ENCODE measurements at regions of chr1 and their contacts with region 1.

Region 1: GRCh38 chr1:20212685-20213331 is 26.5 kb upstream of the PLA2G2C start:
- DNase-seq: peak; percentile 32 to 69 (median 49)
- H3K4me3 ChIP-seq: no peak overlapping the region
- H3K4me3 Mint-ChIP-seq: peak overlapping the region in 6 of 7 donors; percentile 11 to 54 (median 37)
- H3K27ac ChIP-seq: no peak overlapping the region
- H3K27ac Mint-ChIP-seq: peak overlapping the region in 2 of 8 donors; percentile 19 to 34
- H3K4me1 ChIP-seq: peaks cover 12% of the 10 kb centered on the region
- H3K4me1 Mint-ChIP-seq: peaks cover 7 to 14% (median 9%) of the 10 kb centered on the region in 3 donors
- H3K27me3 ChIP-seq: peaks cover 4% of the 10 kb centered on the region
- H3K27me3 Mint-ChIP-seq: peaks cover 24 to 56% of the 10 kb centered on the region in 2 donors

Region 2: DNA sequence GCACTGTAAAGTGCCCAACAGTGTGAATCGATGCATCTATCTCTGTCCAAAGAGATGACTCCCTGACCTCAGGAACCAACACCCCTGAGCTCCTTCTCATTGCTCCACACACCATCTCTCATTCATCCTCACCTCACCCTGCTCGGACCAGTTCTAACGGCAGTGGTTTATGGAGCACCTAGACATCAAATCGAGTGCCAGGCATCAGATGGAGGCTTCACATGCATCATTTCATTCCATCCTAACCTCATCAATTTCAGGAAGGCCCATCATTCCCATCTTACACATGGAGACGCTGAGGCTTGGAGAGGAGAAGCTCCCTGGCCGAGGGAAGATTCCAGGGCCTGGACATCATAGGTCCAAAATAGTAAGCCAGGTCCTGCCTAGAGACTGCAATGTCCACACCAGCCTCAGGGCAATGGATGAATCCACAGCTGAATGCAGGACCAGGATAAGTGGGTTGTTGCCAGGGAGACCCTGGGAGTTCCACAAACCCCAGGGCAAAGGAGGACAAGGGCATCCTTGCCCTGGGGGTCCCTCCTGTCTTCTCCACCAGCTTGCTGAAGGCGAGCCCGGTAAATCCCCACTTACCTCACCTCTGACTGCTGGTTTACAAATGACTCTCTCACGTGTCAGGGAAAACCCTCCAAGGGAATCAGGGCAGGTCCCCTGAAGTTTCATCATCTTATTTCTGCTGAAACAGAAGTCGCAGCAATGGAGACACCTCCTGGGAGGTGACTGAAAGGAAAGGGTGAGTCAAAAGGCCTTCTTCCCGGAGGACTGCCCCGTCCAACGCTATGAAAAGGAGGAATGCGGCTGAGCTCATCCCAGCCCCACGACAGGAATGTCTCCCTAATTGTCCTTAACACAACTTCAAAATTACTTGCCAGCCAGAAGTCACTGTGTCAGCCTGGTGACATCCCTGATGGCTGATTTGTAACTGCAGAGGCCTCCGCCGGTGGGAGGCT is 1247.3 kb before region 1 on chr1:
- CTCF ChIA-PET with region 1: no interaction called
- POLR2A ChIA-PET with region 1: interaction called, 12 read pairs
- DNase-seq: no peak
- H3K4me3 ChIP-seq: no peak overlapping the region
- H3K4me3 Mint-ChIP-seq: no peak overlapping the region
- H3K27ac ChIP-seq: no peak overlapping the region
- H3K27ac Mint-ChIP-seq: no peak overlapping the region
- H3K4me1 ChIP-seq: no peaks in the 10 kb centered on the region
- H3K4me1 Mint-ChIP-seq: no peaks in the 10 kb centered on the region
- H3K27me3 ChIP-seq: peaks cover 3% of the 10 kb centered on the region
- H3K27me3 Mint-ChIP-seq: peaks cover 6% of the 10 kb centered on the region in 2 donors

Region 3: DNA sequence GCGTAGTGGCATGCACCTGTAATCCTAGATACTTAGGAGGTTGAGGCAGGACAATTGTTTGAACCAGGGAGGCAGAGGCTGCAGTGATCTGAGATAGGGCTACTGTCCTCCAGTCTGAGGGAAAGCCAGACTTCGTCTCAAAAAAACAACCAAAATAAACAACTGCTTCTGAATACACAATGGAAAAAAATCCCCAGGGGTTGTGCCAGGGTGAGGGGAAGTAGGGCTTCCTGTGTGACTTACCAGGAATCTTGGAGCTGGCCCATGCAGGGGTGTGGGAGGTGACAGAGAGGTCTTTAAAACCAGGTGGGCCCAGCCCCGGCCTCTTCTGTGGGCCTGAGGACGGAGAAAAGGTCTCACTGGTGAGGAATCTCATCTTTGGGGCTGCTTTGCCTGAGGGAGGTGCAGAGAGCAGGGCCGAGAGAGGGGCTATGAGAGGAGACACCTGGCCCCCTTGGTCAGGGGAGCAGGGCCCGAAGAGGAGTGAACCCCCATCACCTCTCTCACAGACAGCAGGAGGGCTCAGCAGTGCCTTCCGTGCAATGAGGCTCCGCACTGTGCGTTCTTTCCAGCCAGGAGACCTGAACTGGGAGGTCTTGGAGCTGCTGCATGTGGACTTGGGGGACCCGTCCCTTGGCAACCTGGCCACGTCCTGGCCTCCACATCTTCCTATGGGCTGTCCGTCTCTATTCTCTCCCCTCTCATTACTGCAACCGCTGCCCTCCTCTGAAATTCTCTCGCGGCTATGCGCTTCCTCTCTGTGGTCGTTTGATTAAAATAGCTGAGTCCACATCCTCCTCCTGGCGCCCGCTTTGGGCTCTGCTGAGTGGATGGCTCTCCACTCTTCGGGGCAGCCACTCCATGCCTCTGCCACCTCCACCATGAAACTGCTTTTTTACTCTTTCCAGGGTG is 132.1 kb before region 1 on chr1:
- CTCF ChIA-PET with region 1: no interaction called
- POLR2A ChIA-PET with region 1: no interaction called
- DNase-seq: no peak
- H3K4me3 ChIP-seq: no peak overlapping the region
- H3K4me3 Mint-ChIP-seq: peak overlapping the region in 2 of 7 donors; percentile 5 to 41
- H3K27ac ChIP-seq: no peak overlapping the region
- H3K27ac Mint-ChIP-seq: peak overlapping the region in 2 of 8 donors; percentile 42 to 72
- H3K4me1 ChIP-seq: no peaks in the 10 kb centered on the region
- H3K4me1 Mint-ChIP-seq: peaks cover 10 to 16% (median 15%) of the 10 kb centered on the region in 3 donors
- H3K27me3 ChIP-seq: no peaks in the 10 kb centered on the region
- H3K27me3 Mint-ChIP-seq: peaks cover 19 to 61% of the 10 kb centered on the region in 2 donors

Region 4: DNA sequence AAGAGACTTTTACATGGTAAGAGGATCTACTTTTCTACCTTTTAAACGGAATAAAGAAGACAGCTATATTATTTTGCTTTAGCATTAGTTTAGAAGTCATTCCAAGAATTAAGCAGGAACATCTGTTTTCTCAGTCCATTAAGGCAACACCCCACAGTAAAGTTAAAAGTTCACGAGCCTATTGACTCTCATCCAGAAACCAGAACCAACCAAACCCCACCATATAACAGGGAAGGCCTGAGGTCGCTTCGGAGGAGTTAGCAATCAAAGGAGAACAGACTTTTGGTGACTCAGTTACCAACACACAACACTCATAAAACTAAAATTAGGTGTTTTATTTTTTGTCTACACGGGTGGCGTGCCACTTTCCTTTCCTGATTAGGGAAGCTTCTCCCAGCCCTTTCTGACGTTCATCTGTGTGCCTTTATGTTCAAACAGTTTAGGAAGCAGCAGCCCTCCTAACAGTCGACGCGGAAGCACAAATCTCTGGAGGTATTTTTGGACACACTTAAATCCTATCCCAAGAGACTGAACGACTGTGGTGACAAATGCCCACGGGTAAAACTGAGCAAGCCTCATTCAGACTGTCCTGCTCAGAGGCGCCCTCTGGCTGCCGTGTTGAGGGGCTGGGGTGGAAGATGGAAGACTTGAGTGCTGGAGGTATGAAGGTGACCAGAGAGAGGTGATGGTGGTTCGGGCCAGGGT is 17.9 kb before region 1 on chr1:
- CTCF ChIA-PET with region 1: interaction called, 12 read pairs
- POLR2A ChIA-PET with region 1: no interaction called
- DNase-seq: peak; percentile 37 to 75 (median 56)
- H3K4me3 ChIP-seq: no peak overlapping the region
- H3K4me3 Mint-ChIP-seq: no peak overlapping the region
- H3K27ac ChIP-seq: no peak overlapping the region
- H3K27ac Mint-ChIP-seq: no peak overlapping the region
- H3K4me1 ChIP-seq: no peaks in the 10 kb centered on the region
- H3K4me1 Mint-ChIP-seq: peaks cover 0 to 4% (median 0%) of the 10 kb centered on the region in 3 donors
- H3K27me3 ChIP-seq: no peaks in the 10 kb centered on the region
- H3K27me3 Mint-ChIP-seq: peaks cover 17 to 56% of the 10 kb centered on the region in 2 donors

Region 5: GRCh38 chr1:20493839-20494608 is 281.2 kb after region 1 on chr1:
- CTCF ChIA-PET with region 1: interaction called, 41 read pairs
- POLR2A ChIA-PET with region 1: no interaction called
- DNase-seq: peak; percentile 66 to 86 (median 74)
- H3K4me3 ChIP-seq: no peak overlapping the region
- H3K4me3 Mint-ChIP-seq: no peak overlapping the region
- H3K27ac ChIP-seq: no peak overlapping the region
- H3K27ac Mint-ChIP-seq: no peak overlapping the region
- H3K4me1 ChIP-seq: peaks cover 6% of the 10 kb centered on the region
- H3K4me1 Mint-ChIP-seq: peaks cover 0 to 2% (median 0%) of the 10 kb centered on the region in 3 donors
- H3K27me3 ChIP-seq: no peaks in the 10 kb centered on the region
- H3K27me3 Mint-ChIP-seq: peaks cover 0 to 2% of the 10 kb centered on the region in 2 donors